ENCODE measurements at regions of chr2 and their contacts with region 1.

Region 1: DNA sequence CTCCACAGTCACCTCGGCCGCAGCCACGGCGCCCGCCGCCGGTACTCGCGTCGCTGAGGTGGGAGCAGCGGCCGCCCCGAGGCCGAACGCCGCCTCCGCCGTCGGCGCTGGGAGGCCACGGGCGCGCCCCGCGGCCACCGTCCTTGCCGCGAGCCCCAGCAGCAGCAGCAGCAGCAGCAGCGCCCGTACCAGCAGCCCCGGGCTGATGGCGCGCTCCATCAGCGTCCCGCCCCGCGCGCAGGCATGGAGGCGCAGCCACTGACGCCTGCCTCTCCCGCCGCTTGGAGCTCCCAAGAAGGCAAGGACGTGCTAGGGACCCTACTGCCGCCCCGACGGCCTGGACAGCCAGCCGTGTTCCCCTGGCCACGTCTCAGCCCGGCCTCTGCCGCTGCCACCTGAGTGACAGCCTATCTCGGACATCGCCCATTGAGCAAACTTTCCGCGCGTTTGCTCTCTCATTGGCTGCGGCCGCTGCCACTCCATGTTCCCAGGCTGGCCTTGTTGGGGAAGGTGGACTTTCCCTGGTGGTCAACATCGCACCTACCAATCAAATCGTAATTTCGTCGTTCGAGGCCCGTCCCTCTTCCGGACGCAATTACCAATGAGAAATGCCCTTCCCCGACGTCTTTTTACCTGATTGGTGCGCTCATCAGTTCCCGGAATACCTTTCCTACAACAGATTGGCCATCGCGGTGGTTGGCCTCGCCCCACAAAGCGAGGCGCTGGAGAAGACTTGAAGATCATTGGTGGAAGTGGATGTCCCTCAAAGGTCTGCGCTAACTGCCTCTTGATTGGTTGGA is at the start of gene EIF2AK3:
- DNase-seq: peak; percentile 88
- ATAC-seq: peak; percentile 84
- H3K4me3 Mint-ChIP-seq: peak within 1 kb of the TSS; percentile 97
- H3K27ac Mint-ChIP-seq: peak within 1 kb of the TSS; percentile 94
- H3K4me1 Mint-ChIP-seq: peaks cover 7% of the 10 kb centered on the region
- H3K27me3 Mint-ChIP-seq: no peaks in the 10 kb centered on the region
- CTCF ChIP-seq: no peak
- total RNA-seq, gene EIF2AK3: 28.2 and 28.6 TPM in 2 replicates

Region 2: DNA sequence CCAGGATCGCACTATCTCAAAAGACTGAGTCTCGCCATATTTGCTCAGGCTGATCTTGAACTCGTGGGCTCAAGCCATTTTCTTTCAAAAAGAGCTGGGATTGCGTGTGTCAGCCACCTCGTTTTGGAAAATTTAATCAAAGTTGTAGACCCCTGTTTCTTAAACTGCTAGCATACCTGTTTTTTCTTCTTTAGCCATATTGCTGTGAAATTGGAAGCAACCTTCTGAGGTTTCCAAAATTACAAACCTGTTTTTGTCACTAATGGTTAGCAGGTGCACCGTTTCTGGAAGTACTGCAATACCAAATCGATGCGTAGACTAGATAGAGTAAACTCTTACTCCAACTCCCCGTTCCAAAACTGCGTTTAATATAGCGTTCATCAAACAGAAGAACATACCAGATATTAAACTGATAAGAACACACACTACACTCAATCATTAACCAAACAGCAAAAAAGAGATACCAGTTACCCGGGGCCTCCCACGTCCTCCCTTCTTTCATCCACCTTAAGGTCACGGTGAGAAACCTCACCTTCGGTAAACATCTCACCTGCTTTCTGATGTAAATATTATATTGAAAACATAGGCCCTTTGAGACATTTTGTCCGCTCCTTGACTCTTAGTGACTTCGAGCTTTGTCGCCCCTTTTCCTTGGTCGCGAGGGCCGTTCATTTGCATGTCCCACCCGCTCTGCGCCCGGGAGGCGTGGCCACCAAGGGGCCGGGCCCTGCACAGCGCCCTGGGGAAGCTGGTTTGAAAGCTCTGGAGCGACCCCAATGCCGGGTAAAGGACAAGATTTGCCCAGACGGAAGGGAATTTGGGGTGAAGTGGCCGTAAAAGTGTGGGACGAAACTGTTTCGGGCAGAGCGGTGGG is 610.9 kb before region 1 on chr2 and contains the start of gene RNU2-63P:
- CTCF ChIA-PET with region 1: no interaction called
- POLR2A ChIA-PET with region 1: no interaction called
- intact Hi-C with region 1: loop called (anchors 1 kb)
- DNase-seq: peak; percentile 82
- ATAC-seq: peak; percentile 72
- H3K4me3 Mint-ChIP-seq: peak within 1 kb of the TSS; percentile 98
- H3K27ac Mint-ChIP-seq: peak within 1 kb of the TSS; percentile 100
- H3K4me1 Mint-ChIP-seq: peaks cover 31% of the 10 kb centered on the region
- H3K27me3 Mint-ChIP-seq: no peaks in the 10 kb centered on the region
- CTCF ChIP-seq: no peak
- total RNA-seq, gene RNU2-63P: 9.7 and 19.5 TPM in 2 replicates

Region 3: GRCh38 chr2:88568179-88568578 is 59.1 kb before region 1 on chr2:
- CTCF ChIA-PET with region 1: no interaction called
- POLR2A ChIA-PET with region 1: no interaction called
- intact Hi-C with region 1: no loop called
- DNase-seq: no peak
- ATAC-seq: no peak
- H3K4me3 Mint-ChIP-seq: no peak overlapping the region
- H3K27ac Mint-ChIP-seq: no peak overlapping the region
- H3K4me1 Mint-ChIP-seq: peaks cover 3% of the 10 kb centered on the region
- H3K27me3 Mint-ChIP-seq: no peaks in the 10 kb centered on the region
- CTCF ChIP-seq: no peak

Region 4: GRCh38 chr2:88600038-88600465 is 27.2 kb before region 1 on chr2:
- CTCF ChIA-PET with region 1: interaction called, 3 read pairs
- POLR2A ChIA-PET with region 1: interaction called, 59 read pairs
- intact Hi-C with region 1: loop called (anchors 1 kb)
- DNase-seq: no peak
- ATAC-seq: peak; percentile 94
- H3K4me3 Mint-ChIP-seq: peak overlapping the region; percentile 67
- H3K27ac Mint-ChIP-seq: peak overlapping the region; percentile 90
- H3K4me1 Mint-ChIP-seq: peaks cover 89% of the 10 kb centered on the region
- H3K27me3 Mint-ChIP-seq: no peaks in the 10 kb centered on the region
- CTCF ChIP-seq: no peak

Region 5: GRCh38 chr2:88614497-88615157 is 12.6 kb before region 1 on chr2:
- CTCF ChIA-PET with region 1: interaction called, 3 read pairs
- POLR2A ChIA-PET with region 1: interaction called, 19 read pairs
- intact Hi-C with region 1: loop called (anchors 1 kb)
- DNase-seq: no peak
- ATAC-seq: peak; percentile 60
- H3K4me3 Mint-ChIP-seq: no peak overlapping the region
- H3K27ac Mint-ChIP-seq: no peak overlapping the region
- H3K4me1 Mint-ChIP-seq: peaks cover 52% of the 10 kb centered on the region
- H3K27me3 Mint-ChIP-seq: no peaks in the 10 kb centered on the region
- CTCF ChIP-seq: no peak

Region 6: DNA sequence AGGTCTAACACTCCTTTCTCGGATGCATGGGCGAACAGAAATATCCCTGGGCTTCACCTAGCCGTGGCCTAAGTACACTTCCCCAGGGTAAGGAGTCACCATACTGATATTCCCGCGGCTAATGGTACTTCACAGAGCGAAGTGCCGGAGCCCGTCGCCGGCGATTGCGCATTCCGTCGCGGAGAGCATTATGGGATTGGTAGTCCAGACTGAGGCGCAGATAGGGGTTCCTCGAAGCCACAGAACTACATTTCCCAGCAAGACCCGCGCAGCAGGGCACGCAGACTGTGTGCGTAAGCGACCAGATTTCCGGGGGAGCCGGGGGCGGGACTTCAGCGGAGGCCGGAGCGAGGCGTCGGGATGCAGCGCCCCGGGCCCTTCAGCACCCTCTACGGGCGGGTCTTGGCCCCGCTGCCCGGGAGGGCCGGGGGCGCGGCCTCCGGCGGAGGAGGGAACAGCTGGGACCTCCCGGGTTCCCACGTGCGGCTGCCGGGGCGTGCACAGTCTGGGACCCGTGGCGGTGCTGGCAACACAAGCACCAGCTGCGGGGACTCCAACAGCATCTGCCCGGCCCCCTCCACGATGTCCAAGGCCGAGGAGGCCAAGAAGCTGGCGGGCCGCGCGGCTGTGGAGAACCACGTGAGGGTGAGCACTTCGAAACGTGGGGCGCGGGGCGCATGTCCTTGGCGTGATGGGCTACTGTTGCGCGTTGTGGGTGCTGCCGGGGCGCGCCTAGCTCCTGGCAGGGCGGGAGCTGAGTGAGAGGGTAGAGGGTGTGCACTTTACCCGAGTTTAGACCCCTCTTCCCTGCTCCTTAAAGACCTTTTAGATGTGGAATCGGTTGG is 64.3 kb after region 1 on chr2 and contains the start of gene RPIA:
- CTCF ChIA-PET with region 1: interaction called, 3 read pairs
- POLR2A ChIA-PET with region 1: interaction called, 8 read pairs
- intact Hi-C with region 1: loop called (anchors 1 kb)
- DNase-seq: peak; percentile 94
- ATAC-seq: peak; percentile 94
- H3K4me3 Mint-ChIP-seq: peak within 1 kb of the TSS; percentile 96
- H3K27ac Mint-ChIP-seq: peak within 1 kb of the TSS; percentile 86
- H3K4me1 Mint-ChIP-seq: peaks cover 44% of the 10 kb centered on the region
- H3K27me3 Mint-ChIP-seq: no peaks in the 10 kb centered on the region
- CTCF ChIP-seq: no peak
- total RNA-seq, gene RPIA: 34.9 and 35.9 TPM in 2 replicates